Activated CD8-positive, alpha-beta T cell treated with anti-CD3 and anti-CD28 coated beads for 36 hours (primary cell): ENCODE measurements at regions of chr6 and their contacts with region 1.

Region 1: DNA sequence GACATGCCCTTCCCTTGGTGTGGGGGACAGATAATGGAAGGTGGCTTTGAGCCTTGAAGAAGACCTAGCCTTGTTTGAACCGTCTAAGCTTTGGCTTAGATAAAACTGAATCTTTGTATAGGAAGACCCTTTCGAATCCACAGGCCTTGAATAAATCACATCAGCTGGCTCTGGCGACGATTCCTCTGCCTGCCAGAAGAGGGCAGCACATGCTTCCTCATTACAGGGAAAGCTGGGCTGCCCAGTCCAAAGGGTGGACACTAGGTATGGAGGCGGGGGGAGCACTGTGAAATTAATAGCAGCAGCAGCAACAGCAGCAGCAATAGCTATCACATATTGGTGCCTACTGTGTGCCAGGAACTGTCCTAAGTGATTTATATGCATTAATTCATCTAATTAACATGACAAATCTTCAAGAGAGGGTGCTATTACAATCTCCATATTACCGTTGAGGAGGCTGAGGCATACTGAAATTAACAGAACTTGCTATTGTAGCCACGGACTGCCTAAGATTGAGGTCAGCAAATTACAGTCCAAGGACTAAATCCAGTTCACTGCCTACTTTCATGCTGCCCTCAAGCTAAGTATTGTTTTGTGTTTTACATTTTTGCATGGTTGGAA is 85.1 kb downstream of the CLIC5 start:
- DNase-seq: peak; percentile 69
- ATAC-seq: peak; percentile 65
- H3K4me3 Mint-ChIP-seq: no peak overlapping the region
- H3K27ac Mint-ChIP-seq: no peak overlapping the region
- H3K4me1 Mint-ChIP-seq: peaks cover 6% of the 10 kb centered on the region
- H3K27me3 Mint-ChIP-seq: peaks cover 2% of the 10 kb centered on the region
- CTCF ChIP-seq: peak; percentile 99

Region 2: GRCh38 chr6:45647341-45648261 is 282.9 kb before region 1 on chr6:
- CTCF ChIA-PET with region 1: no interaction called
- POLR2A ChIA-PET with region 1: no interaction called
- intact Hi-C with region 1: no loop called
- DNase-seq: no peak
- ATAC-seq: no peak
- H3K4me3 Mint-ChIP-seq: no peak overlapping the region
- H3K27ac Mint-ChIP-seq: peak overlapping the region; percentile 46
- H3K4me1 Mint-ChIP-seq: peaks cover 20% of the 10 kb centered on the region
- H3K27me3 Mint-ChIP-seq: peaks cover 4% of the 10 kb centered on the region
- CTCF ChIP-seq: no peak

Region 3: GRCh38 chr6:45942953-45943352 is 12.4 kb after region 1 on chr6:
- CTCF ChIA-PET with region 1: interaction called, 37 read pairs
- POLR2A ChIA-PET with region 1: interaction called, 5 read pairs
- intact Hi-C with region 1: no loop called
- DNase-seq: no peak
- ATAC-seq: no peak
- H3K4me3 Mint-ChIP-seq: no peak overlapping the region
- H3K27ac Mint-ChIP-seq: no peak overlapping the region
- H3K4me1 Mint-ChIP-seq: no peaks in the 10 kb centered on the region
- H3K27me3 Mint-ChIP-seq: no peaks in the 10 kb centered on the region
- CTCF ChIP-seq: no peak

Region 4: DNA sequence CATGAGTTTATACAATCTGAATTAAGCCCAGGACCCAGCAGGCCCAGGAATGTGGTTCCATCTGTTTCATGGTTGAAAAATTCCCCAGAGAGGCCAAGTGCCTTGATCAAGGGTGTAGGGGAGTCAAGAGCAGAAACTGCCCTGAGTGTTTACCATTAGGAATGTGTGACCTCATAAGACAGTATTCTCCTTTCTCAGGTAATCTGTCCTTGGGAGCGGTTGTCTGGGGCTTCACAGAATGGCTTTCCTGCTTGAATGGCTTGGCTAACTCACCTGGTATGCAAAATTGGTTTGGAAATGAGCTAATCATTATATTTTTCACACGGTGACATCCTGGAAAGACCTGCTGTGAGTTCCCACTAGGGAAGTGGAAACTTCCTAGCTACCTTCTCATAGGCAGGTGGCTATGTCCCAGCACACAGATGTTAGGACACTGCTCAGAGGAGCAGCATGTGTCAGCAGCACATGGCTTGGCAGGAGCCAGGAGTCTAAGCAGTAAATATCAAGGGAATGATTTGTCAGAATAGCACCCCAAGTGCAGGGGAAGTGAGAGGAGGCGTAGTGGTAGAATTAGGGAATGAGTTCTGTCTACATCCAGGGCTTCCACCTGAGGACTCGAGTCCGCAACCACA is 67.5 kb after region 1 on chr6:
- CTCF ChIA-PET with region 1: no interaction called
- POLR2A ChIA-PET with region 1: no interaction called
- intact Hi-C with region 1: no loop called
- DNase-seq: no peak
- ATAC-seq: no peak
- H3K4me3 Mint-ChIP-seq: no peak overlapping the region
- H3K27ac Mint-ChIP-seq: no peak overlapping the region
- H3K4me1 Mint-ChIP-seq: no peaks in the 10 kb centered on the region
- H3K27me3 Mint-ChIP-seq: no peaks in the 10 kb centered on the region
- CTCF ChIP-seq: no peak

Region 5: GRCh38 chr6:46011241-46012085 is 80.9 kb after region 1 on chr6:
- CTCF ChIA-PET with region 1: interaction called, 11 read pairs
- POLR2A ChIA-PET with region 1: no interaction called
- intact Hi-C with region 1: no loop called
- DNase-seq: peak; percentile 86
- ATAC-seq: peak; percentile 91
- H3K4me3 Mint-ChIP-seq: peak overlapping the region; percentile 53
- H3K27ac Mint-ChIP-seq: peak overlapping the region; percentile 91
- H3K4me1 Mint-ChIP-seq: peaks cover 54% of the 10 kb centered on the region
- H3K27me3 Mint-ChIP-seq: peaks cover 1% of the 10 kb centered on the region
- CTCF ChIP-seq: no peak